ENCODE measurements at regions of chr3 and their contacts with region 1.

Region 1: GRCh38 chr3:48273594-48274211 is 32.8 kb downstream of the ZNF589 start:
- DNase-seq: peak; percentile 76
- H3K4me3 ChIP-seq: no peak overlapping the region
- H3K27ac ChIP-seq: no peak overlapping the region
- H3K4me1 ChIP-seq: no peaks in the 10 kb centered on the region
- CTCF ChIP-seq: peak; percentile 88

Region 2: DNA sequence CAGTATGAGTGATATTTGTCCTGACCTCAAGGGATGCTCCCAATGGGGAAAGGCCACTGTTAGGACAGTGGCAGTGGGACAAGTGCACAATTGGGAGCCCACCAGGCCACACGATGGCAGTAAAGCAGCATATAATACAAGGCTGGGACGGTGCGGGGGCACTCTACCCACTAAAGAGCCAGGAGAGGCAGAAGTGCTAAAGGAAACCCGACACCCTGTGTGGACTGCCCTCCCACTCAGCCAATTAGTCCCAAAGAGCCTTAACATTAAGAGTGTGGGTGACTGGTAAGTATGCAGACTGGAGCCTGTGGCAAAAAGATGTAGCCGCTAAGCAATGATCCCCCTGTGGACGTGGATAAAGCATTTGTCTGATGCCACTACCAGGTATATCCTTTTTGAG is 41.0 kb before region 1 on chr3:
- CTCF ChIA-PET with region 1: no interaction called
- POLR2A ChIA-PET with region 1: no interaction called
- intact Hi-C with region 1: loop called (anchors 2 kb)
- DNase-seq: peak; percentile 90
- H3K4me3 ChIP-seq: peak overlapping the region; percentile 60
- H3K27ac ChIP-seq: peak overlapping the region; percentile 30
- H3K4me1 ChIP-seq: peaks cover 54% of the 10 kb centered on the region
- CTCF ChIP-seq: peak; percentile 98

Region 3: DNA sequence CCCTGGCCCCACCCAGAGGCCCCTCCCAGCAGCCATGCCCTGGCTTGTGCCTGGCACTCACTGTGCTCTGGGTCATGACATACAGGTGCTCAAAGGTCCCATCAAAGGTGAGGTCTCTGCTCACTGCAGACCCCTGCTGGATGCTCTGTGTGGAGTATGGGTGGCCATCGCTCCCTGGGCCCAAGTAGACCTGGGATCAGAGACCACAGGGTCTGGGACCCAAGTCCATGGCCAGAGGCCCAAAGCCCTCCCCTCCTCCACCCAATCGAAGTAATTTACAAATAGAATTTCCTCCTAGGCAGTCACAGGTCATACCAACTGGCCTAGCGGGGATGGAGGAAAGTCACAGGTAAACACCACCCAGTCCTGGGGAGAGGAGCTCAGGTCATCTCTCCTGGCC is 148.6 kb after region 1 on chr3:
- CTCF ChIA-PET with region 1: no interaction called
- POLR2A ChIA-PET with region 1: no interaction called
- intact Hi-C with region 1: loop called (anchors 5 kb)
- DNase-seq: peak; percentile 43
- H3K4me3 ChIP-seq: no peak overlapping the region
- H3K27ac ChIP-seq: no peak overlapping the region
- H3K4me1 ChIP-seq: no peaks in the 10 kb centered on the region
- CTCF ChIP-seq: peak; percentile 63

Region 4: GRCh38 chr3:48548729-48549705 is 275.3 kb after region 1 on chr3:
- CTCF ChIA-PET with region 1: no interaction called
- POLR2A ChIA-PET with region 1: no interaction called
- intact Hi-C with region 1: loop called (anchors 5 kb)
- DNase-seq: peak; percentile 86
- H3K4me3 ChIP-seq: no peak overlapping the region
- H3K27ac ChIP-seq: no peak overlapping the region
- H3K4me1 ChIP-seq: no peaks in the 10 kb centered on the region
- CTCF ChIP-seq: peak; percentile 98

Region 5: DNA sequence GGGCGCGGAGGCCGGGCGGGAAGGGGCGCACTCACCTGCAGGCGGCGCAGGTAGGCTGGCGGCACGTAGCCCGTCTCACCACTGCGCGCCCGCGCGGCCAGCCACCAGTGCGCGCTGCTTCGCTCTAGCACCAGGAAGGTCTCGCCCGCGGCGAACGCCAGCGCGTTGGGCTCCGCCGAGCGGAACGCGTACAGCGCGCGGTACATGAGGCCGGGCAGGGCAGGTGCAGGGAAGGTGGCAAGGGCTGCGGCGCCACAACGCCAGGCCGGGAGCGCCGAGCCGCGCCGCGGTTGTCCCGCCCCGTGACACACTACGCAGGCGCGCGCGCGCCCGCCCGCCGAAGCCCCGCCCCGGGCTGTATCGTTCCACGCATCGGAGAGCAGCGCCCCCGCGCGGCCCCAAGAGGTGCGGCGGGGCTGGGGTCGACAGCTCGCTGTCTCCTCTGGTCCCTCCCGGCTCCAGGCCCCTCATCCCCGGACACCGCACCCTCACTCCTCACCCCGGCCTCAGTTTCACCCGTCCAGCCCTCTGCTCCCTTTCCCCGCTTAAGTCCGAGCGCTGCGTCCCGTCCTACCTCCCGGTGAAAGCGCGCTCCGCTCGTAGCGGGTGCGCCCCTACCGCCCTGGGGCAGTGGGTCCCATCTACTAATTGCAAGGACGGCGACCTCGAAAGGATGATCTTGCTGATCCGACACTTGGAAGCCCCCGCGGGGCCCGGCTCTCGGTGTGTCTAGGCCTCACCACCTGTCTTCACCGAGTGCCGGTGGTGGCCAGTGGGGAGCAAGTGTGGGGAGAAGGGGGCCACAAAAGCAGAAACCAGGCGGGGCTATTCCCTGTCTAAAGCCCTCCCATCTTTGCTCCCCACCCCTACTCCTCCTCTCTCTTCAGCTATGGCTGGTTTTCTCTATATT is 412.2 kb after region 1 on chr3 and contains the start of gene NCKIPSD:
- CTCF ChIA-PET with region 1: no interaction called
- POLR2A ChIA-PET with region 1: no interaction called
- intact Hi-C with region 1: no loop called
- DNase-seq: peak; percentile 94
- H3K4me3 ChIP-seq: peak within 1 kb of the TSS; percentile 84
- H3K27ac ChIP-seq: peak within 1 kb of the TSS; percentile 75
- H3K4me1 ChIP-seq: peaks cover 33% of the 10 kb centered on the region
- CTCF ChIP-seq: peak; percentile 81
- total RNA-seq, gene NCKIPSD: 34.8 and 42.1 TPM in 2 replicates

Region 6: GRCh38 chr3:48747706-48748105 is 474.0 kb after region 1 on chr3:
- CTCF ChIA-PET with region 1: no interaction called
- POLR2A ChIA-PET with region 1: no interaction called
- intact Hi-C with region 1: no loop called
- DNase-seq: no peak
- H3K4me3 ChIP-seq: no peak overlapping the region
- H3K27ac ChIP-seq: no peak overlapping the region
- H3K4me1 ChIP-seq: no peaks in the 10 kb centered on the region
- CTCF ChIP-seq: no peak